ENCODE measurements at regions of chr9 and their contacts with region 1.

Region 1: DNA sequence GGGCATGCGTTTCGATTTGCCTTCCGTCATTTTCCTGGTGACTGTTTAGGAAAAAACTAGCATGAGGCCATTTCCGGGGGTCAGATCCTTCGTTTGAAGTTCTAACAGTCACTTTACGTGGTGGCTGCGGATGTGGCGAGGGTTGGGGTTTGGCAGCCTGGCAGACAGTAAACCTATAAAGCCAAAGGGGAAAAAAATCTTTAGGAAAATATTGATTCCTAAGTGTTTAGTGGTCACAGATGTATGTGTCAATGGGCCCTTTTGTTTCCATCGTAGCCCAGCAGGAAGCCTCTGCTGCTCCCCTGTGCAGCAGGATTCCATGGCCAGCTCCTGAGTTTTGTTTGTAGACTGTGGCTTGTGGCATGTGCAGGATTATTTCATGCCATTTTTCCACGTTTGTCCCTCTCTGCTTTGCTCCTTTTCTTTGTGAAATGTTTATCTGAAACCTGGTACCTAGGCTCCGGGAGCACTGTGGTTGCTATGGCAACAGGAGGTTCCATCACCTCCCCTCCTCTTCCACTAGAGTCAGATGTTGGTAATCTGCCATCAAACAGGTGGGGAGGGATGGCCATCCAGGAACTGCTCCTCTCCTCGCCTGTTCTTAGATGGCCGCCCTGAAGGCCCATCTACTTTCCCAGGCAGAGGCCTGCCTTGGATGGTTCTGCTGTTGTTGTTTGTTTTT is 202.3 kb downstream of the AOPEP start:
- DNase-seq: peak; percentile 35
- H3K4me3 ChIP-seq: no peak overlapping the region
- H3K27ac ChIP-seq: peak overlapping the region; percentile 97
- H3K4me1 ChIP-seq: peaks cover 19% of the 10 kb centered on the region
- H3K27me3 ChIP-seq: no peaks in the 10 kb centered on the region
- CTCF ChIP-seq: no peak
- POLR2A ChIP-seq: no peak

Region 2: GRCh38 chr9:94697972-94698581 is 230.8 kb before region 1 on chr9:
- CTCF ChIA-PET with region 1: no interaction called
- POLR2A ChIA-PET with region 1: no interaction called
- dilution Hi-C with region 1: no loop called
- intact Hi-C with region 1: no loop called
- DNase-seq: no peak
- H3K4me3 ChIP-seq: no peak overlapping the region
- H3K27ac ChIP-seq: no peak overlapping the region
- H3K4me1 ChIP-seq: no peaks in the 10 kb centered on the region
- H3K27me3 ChIP-seq: peaks cover 3 to 13% of the 10 kb centered on the region in 2 experiments
- CTCF ChIP-seq: no peak
- POLR2A ChIP-seq: no peak

Region 3: GRCh38 chr9:94805585-94805984 is 123.2 kb before region 1 on chr9:
- CTCF ChIA-PET with region 1: no interaction called
- POLR2A ChIA-PET with region 1: no interaction called
- dilution Hi-C with region 1: no loop called
- intact Hi-C with region 1: loop called (anchors 5 kb)
- DNase-seq: peak; percentile 96
- H3K4me3 ChIP-seq: no peak overlapping the region
- H3K27ac ChIP-seq: peak overlapping the region; percentile 52
- H3K4me1 ChIP-seq: peaks cover 17% of the 10 kb centered on the region
- H3K27me3 ChIP-seq: no peaks in the 10 kb centered on the region
- CTCF ChIP-seq: no peak
- POLR2A ChIP-seq: peak; percentile 20

Region 4: DNA sequence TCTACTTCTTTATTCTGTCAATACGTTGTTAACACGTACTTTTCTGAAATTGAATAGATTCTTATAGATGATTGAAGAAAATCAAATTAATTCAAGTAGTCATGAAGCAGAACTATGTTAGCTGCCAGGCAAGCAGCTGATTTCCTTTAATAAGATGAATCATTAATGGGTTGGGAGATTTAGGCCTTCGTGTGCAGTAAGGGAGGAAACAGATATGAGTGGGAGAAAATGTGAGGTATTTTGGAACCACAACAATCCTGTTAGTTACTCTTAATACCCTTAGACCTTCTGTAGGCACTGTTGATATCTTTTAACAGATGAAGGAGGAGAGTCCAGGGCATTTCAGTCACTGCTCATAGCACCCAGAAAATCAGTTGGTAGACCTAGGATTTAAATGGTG is 81.3 kb before region 1 on chr9:
- CTCF ChIA-PET with region 1: no interaction called
- POLR2A ChIA-PET with region 1: no interaction called
- dilution Hi-C with region 1: no loop called
- intact Hi-C with region 1: no loop called
- DNase-seq: peak; percentile 88
- H3K4me3 ChIP-seq: no peak overlapping the region
- H3K27ac ChIP-seq: peak overlapping the region; percentile 15
- H3K4me1 ChIP-seq: peaks cover 11% of the 10 kb centered on the region
- H3K27me3 ChIP-seq: no peaks in the 10 kb centered on the region
- CTCF ChIP-seq: no peak
- POLR2A ChIP-seq: no peak

Region 5: GRCh38 chr9:94867281-94867841 is 61.5 kb before region 1 on chr9:
- CTCF ChIA-PET with region 1: interaction called, 3 read pairs
- POLR2A ChIA-PET with region 1: no interaction called
- dilution Hi-C with region 1: no loop called
- intact Hi-C with region 1: loop called (anchors 2 kb)
- DNase-seq: peak; percentile 93
- H3K4me3 ChIP-seq: peak overlapping the region in 1 of 3 experiments; percentile 16
- H3K27ac ChIP-seq: peak overlapping the region; percentile 90
- H3K4me1 ChIP-seq: peaks cover 47% of the 10 kb centered on the region
- H3K27me3 ChIP-seq: no peaks in the 10 kb centered on the region
- CTCF ChIP-seq: no peak
- POLR2A ChIP-seq: no peak

Region 6: DNA sequence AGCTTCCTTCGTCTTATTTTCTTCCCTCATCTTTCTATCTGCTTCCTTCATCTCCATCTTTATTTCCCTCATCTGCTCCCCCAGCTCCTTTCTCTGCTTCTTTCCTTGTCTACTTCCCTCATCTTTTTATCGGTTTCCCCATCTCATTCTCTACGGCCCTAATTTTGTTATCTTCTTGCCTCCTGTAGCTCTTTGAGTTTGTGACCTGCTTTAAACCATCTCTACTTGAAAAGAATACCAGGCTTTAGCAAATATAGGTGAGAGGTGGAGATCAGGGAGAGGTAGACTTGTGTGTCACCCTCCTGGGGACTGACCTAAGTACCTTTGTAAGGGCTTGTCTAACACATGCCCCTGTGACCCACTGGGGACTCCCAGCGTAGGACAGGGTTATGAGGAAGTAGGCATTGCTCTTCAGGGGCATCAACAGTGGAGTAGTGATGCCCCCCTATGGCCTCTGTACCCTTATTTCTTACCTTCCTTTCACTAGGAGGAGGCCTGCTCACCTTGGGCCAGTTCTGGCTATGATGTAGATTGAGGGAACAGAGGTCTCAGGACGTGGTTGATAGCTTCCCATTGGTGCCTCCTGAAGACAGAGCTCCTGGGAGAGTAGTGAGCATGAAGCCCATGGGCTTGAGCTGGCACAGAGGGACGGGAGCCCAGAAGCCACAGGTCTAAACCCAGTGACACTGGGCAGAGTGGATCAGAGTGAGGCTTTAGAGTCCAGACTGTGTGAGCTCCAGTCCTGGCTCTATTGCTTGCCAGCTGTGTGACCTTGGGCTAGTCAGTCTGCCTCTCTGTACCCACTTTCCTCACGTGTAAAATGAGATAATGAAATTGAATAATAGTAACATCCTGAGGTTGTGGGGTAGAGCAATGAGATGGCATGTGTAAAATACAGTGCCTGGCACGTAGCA is 10.7 kb before region 1 on chr9:
- CTCF ChIA-PET with region 1: interaction called, 4 read pairs
- POLR2A ChIA-PET with region 1: no interaction called
- dilution Hi-C with region 1: no loop called
- intact Hi-C with region 1: loop called (anchors 2 kb)
- DNase-seq: no peak
- H3K4me3 ChIP-seq: no peak overlapping the region
- H3K27ac ChIP-seq: no peak overlapping the region
- H3K4me1 ChIP-seq: peaks cover 40% of the 10 kb centered on the region
- H3K27me3 ChIP-seq: no peaks in the 10 kb centered on the region
- CTCF ChIP-seq: no peak
- POLR2A ChIP-seq: no peak

Region 7: GRCh38 chr9:94952565-94953373 is 23.9 kb after region 1 on chr9:
- CTCF ChIA-PET with region 1: interaction called, 7 read pairs
- POLR2A ChIA-PET with region 1: interaction called, 3 read pairs
- dilution Hi-C with region 1: no loop called
- intact Hi-C with region 1: loop called (anchors 1 kb)
- DNase-seq: peak; percentile 89
- H3K4me3 ChIP-seq: no peak overlapping the region
- H3K27ac ChIP-seq: peak overlapping the region; percentile 55
- H3K4me1 ChIP-seq: peaks cover 28% of the 10 kb centered on the region
- H3K27me3 ChIP-seq: no peaks in the 10 kb centered on the region
- CTCF ChIP-seq: no peak
- POLR2A ChIP-seq: no peak

Region 8: GRCh38 chr9:94996641-94997040 is 67.8 kb after region 1 on chr9:
- CTCF ChIA-PET with region 1: no interaction called
- POLR2A ChIA-PET with region 1: no interaction called
- dilution Hi-C with region 1: no loop called
- intact Hi-C with region 1: loop called (anchors 1 kb)
- DNase-seq: peak; percentile 72
- H3K4me3 ChIP-seq: no peak overlapping the region
- H3K27ac ChIP-seq: peak overlapping the region; percentile 65
- H3K4me1 ChIP-seq: peaks cover 24% of the 10 kb centered on the region
- H3K27me3 ChIP-seq: no peaks in the 10 kb centered on the region
- CTCF ChIP-seq: no peak
- POLR2A ChIP-seq: no peak

Region 9: GRCh38 chr9:95025213-95026147 is 96.6 kb after region 1 on chr9:
- CTCF ChIA-PET with region 1: interaction called, 3 read pairs
- POLR2A ChIA-PET with region 1: no interaction called
- dilution Hi-C with region 1: no loop called
- intact Hi-C with region 1: loop called (anchors 1 kb)
- DNase-seq: peak; percentile 89
- H3K4me3 ChIP-seq: peak overlapping the region in 1 of 3 experiments; percentile 20
- H3K27ac ChIP-seq: peak overlapping the region; percentile 7
- H3K4me1 ChIP-seq: peaks cover 38% of the 10 kb centered on the region
- H3K27me3 ChIP-seq: no peaks in the 10 kb centered on the region
- CTCF ChIP-seq: peak in 1 of 2 donors; percentile 33
- POLR2A ChIP-seq: no peak

Region 10: GRCh38 chr9:95065224-95065623 is 136.4 kb after region 1 on chr9:
- CTCF ChIA-PET with region 1: no interaction called
- POLR2A ChIA-PET with region 1: no interaction called
- dilution Hi-C with region 1: no loop called
- intact Hi-C with region 1: no loop called
- DNase-seq: no peak
- H3K4me3 ChIP-seq: no peak overlapping the region
- H3K27ac ChIP-seq: no peak overlapping the region
- H3K4me1 ChIP-seq: no peaks in the 10 kb centered on the region
- H3K27me3 ChIP-seq: no peaks in the 10 kb centered on the region
- CTCF ChIP-seq: no peak
- POLR2A ChIP-seq: no peak

Measured in endothelial cell of umbilical vein (primary cell).